ENCODE measurements at regions of chr10 and their contacts with region 1.

Region 1: GRCh38 chr10:52818019-52818418 is 45.4 kb upstream of the MBL2 start:
- DNase-seq: peak; percentile 6
- H3K4me3 ChIP-seq: peak overlapping the region in 1 of 2 experiments; percentile 35; a peak in 1 of 4 replicates
- H3K27ac ChIP-seq: no peak overlapping the region
- H3K4me1 ChIP-seq: no peaks in the 10 kb centered on the region
- H3K27me3 ChIP-seq: no peaks in the 10 kb centered on the region
- CTCF ChIP-seq: peak; percentile 60
- EP300 ChIP-seq: no peak
- RAD21 ChIP-seq: peak; percentile 73

Region 2: GRCh38 chr10:52800938-52801337 is 17.1 kb before region 1 on chr10:
- CTCF ChIA-PET with region 1: interaction called, 11 read pairs
- POLR2A ChIA-PET with region 1: no interaction called
- DNase-seq: no peak
- H3K4me3 ChIP-seq: no peak overlapping the region
- H3K27ac ChIP-seq: no peak overlapping the region
- H3K4me1 ChIP-seq: no peaks in the 10 kb centered on the region
- H3K27me3 ChIP-seq: no peaks in the 10 kb centered on the region
- CTCF ChIP-seq: no peak
- EP300 ChIP-seq: no peak
- RAD21 ChIP-seq: no peak

Region 3: DNA sequence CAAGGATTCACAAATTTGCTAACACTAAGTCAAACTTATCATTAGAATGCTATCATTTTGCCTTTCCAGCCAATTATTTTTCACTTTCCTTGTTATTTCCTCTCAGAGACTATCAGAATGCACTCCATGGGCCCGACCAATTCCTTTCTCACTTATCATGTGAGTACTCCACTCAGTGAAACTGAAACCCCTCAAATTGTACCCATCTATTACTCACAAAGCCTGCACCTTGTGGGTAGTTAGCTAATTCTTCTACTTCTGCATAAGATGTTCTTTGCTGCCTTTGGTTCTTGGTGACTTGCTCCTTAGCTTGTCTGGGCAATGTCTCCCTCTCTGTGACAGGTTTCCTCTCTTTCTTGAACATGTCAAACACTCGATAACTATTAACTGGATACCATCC is 10.2 kb before region 1 on chr10:
- CTCF ChIA-PET with region 1: interaction called, 13 read pairs
- POLR2A ChIA-PET with region 1: no interaction called
- DNase-seq: no peak
- H3K4me3 ChIP-seq: no peak overlapping the region
- H3K27ac ChIP-seq: no peak overlapping the region
- H3K4me1 ChIP-seq: no peaks in the 10 kb centered on the region
- H3K27me3 ChIP-seq: no peaks in the 10 kb centered on the region; the same call in 1 of the 2 replicates
- CTCF ChIP-seq: no peak
- EP300 ChIP-seq: no peak
- RAD21 ChIP-seq: no peak

Region 4: GRCh38 chr10:52871191-52871843 is 53.3 kb after region 1 on chr10:
- CTCF ChIA-PET with region 1: interaction called, 12 read pairs
- POLR2A ChIA-PET with region 1: no interaction called
- DNase-seq: peak; percentile 37
- H3K4me3 ChIP-seq: no peak overlapping the region; a peak in 1 of 4 replicates
- H3K27ac ChIP-seq: no peak overlapping the region
- H3K4me1 ChIP-seq: no peaks in the 10 kb centered on the region; a peak in 1 of 4 replicates
- H3K27me3 ChIP-seq: no peaks in the 10 kb centered on the region; the same call in 1 of the 2 replicates
- CTCF ChIP-seq: no peak
- EP300 ChIP-seq: no peak
- RAD21 ChIP-seq: no peak

Region 5: GRCh38 chr10:52918714-52919305 is 100.8 kb after region 1 on chr10:
- CTCF ChIA-PET with region 1: no interaction called
- POLR2A ChIA-PET with region 1: no interaction called
- DNase-seq: no peak
- H3K4me3 ChIP-seq: no peak overlapping the region
- H3K27ac ChIP-seq: no peak overlapping the region
- H3K4me1 ChIP-seq: no peaks in the 10 kb centered on the region
- H3K27me3 ChIP-seq: no peaks in the 10 kb centered on the region
- CTCF ChIP-seq: no peak
- EP300 ChIP-seq: no peak
- RAD21 ChIP-seq: no peak

Region 6: DNA sequence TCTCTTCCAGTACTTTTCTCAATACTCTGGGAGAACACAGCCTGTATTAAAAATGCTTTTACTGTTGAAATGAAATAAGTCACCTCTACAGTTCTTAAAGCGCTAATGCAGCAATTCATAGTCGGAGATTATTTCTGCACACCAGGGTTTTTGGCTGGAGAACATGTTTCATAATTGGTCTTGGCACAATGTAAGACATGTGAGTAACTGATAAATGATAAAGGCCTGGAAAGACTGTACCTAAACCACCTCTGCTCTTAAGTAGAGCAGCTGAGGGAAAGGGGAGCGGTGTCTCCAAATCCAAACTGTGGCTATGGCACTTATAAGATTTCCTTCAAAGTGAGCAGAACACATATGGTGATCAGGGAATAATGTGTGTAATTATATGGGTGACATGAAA is 344.8 kb after region 1 on chr10:
- CTCF ChIA-PET with region 1: no interaction called
- POLR2A ChIA-PET with region 1: no interaction called
- DNase-seq: no peak
- H3K4me3 ChIP-seq: no peak overlapping the region
- H3K27ac ChIP-seq: no peak overlapping the region
- H3K4me1 ChIP-seq: no peaks in the 10 kb centered on the region
- H3K27me3 ChIP-seq: no peaks in the 10 kb centered on the region
- CTCF ChIP-seq: no peak
- EP300 ChIP-seq: no peak
- RAD21 ChIP-seq: no peak